HEK293 (cell line): ENCODE measurements at regions of chr20 and their contacts with region 1.

Region 1: DNA sequence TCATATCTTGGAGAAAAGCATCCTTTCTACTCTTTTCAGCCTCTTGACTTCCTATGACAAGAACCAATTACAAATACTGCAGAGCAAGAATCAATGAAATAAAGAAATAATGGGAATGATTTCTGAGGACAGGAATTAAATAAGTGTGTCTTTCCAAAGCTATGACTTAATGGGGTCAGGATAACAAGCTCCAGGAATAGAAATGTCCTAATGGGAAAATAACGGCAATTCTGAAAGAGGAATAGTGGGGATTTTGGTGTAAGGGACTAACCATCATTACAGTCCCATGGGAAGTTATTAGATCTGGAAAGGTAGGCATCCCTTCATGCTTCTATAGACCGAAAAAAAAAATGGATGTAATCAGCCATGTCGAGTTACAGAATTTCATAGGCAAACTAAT is 28.2 kb upstream of the SNAP25 start:
- H3K4me3 ChIP-seq: no peak overlapping the region
- H3K27ac ChIP-seq: no peak overlapping the region
- H3K4me1 ChIP-seq: no peaks in the 10 kb centered on the region
- CTCF ChIP-seq: no peak

Region 2: DNA sequence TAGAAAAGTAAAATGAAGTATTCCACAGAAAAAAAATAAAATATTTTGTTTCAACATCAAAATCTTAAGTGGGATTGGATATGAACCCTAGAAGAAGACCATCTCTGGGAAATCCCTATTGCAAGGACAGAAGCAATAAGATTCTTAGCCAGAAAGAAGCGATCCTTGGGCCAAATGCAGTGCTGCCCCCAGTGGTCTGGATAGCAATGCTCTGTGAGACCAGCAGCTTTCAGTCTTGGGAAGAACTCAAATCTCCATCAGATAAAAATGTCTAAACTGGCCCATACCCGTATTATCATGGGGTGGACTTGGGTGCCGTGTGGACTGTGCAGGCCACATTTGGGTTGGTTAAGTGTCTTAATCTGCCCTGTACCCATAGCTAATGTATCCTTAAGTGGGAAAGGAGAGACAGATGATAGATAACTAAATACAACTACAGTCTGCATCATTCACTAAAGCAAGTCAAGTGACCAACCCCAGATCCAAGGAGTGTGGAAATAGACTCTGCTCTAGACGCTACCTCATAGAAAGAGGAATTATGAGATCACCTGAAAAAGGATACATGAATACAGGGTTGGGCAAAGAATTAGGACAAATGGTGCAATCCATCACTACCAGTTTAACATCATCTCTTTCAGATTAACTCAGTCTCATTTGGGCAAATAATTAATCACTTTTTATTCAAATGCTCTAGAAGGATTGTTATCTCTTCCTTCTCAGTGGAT is 10.7 kb before region 1 on chr20:
- CTCF ChIA-PET with region 1: interaction called, 11 read pairs
- POLR2A ChIA-PET with region 1: no interaction called
- H3K4me3 ChIP-seq: no peak overlapping the region
- H3K27ac ChIP-seq: no peak overlapping the region
- H3K4me1 ChIP-seq: no peaks in the 10 kb centered on the region
- CTCF ChIP-seq: no peak